PC-9 (cell line): ENCODE measurements at regions of chr9 and their contacts with region 1.

Region 1: GRCh38 chr9:37565661-37566618 is 10.2 kb downstream of the FBXO10 start:
- DNase-seq: no peak
- H3K4me3 ChIP-seq: no peak overlapping the region
- H3K27ac ChIP-seq: no peak overlapping the region
- H3K4me1 ChIP-seq: no peaks in the 10 kb centered on the region
- H3K27me3 ChIP-seq: no peaks in the 10 kb centered on the region
- CTCF ChIP-seq: no peak

Region 2: GRCh38 chr9:36317764-36318163 is 1248.2 kb before region 1 on chr9:
- CTCF ChIA-PET with region 1: no interaction called
- POLR2A ChIA-PET with region 1: interaction called, 19 read pairs
- intact Hi-C with region 1: no loop called
- DNase-seq: peak; percentile 89 to 96
- H3K4me3 ChIP-seq: no peak overlapping the region
- H3K27ac ChIP-seq: peak overlapping the region; percentile 95
- H3K4me1 ChIP-seq: peaks cover 61% of the 10 kb centered on the region
- H3K27me3 ChIP-seq: no peaks in the 10 kb centered on the region
- CTCF ChIP-seq: no peak

Region 3: DNA sequence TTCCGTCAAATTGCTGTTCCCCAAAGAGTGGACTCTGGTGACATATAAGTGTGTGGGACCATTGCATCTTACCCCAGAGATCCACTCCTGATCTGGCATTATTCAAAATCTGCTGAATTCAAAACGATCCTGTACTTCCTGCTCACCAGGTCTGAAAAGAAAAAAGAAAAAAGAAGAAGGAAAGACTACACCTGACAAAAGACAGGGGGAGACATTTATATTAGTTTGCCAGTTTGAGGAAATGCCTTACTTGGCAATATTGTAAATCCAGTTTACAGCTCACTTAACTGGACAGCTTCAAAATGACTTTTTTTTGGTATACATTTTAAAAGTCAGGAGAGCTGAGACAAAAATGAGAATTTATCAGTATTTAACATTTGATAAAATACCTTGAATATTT is 158.5 kb before region 1 on chr9:
- CTCF ChIA-PET with region 1: interaction called, 17 read pairs
- POLR2A ChIA-PET with region 1: no interaction called
- intact Hi-C with region 1: no loop called
- DNase-seq: no peak
- H3K4me3 ChIP-seq: no peak overlapping the region
- H3K27ac ChIP-seq: no peak overlapping the region
- H3K4me1 ChIP-seq: peaks cover 67% of the 10 kb centered on the region
- H3K27me3 ChIP-seq: no peaks in the 10 kb centered on the region
- CTCF ChIP-seq: peak; percentile 37; the same call in 1 of the 2 replicates